A549 (cell line): ENCODE measurements at regions of chr7 and their contacts with region 1.

Region 1: DNA sequence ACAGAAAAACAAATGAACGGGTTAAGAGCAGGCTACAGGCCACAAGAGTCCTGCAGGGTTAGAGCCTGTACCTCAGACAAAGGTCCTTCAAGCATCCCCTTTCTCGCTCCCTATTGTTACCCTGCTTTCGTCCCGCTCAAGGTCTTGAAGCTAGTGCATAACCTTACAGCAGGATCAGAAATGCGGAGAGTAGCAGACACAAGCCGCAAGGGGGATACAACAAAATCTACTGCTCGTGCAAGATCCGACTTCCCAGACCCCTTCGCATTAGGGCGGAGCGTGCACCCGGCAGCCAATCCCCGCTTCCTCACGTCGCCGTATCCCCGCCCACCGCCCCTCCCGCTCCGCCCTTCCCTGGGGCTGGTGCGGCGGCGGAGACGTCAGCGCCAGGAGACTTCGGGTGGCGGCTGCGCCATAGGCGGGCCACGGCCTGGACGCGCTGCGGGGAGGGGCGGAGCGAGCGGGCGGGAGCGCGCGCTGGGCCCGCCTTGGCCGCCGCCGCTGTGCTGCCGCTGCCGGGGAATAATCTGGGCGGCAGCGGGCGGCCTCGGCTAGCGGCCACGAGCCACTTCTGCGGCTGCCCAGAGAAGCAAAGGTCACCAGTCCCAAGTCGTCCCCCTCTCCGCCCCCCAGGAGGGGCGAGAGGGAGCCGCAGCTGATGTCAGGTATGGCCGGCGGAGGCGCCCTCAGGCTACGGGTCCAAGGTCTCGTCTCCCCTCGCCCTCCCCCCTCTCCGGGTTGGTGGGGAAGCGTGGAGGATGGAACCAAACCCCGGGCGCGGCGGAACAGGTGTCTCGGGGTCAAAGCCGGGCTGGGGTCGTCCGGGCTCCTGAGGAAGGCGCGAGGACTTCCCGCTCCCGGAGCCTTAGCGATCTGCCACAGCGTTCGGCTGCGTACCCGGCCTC is at the start of gene C1GALT1:
- DNase-seq: peak; percentile 81 to 98
- ATAC-seq: peak; percentile 88 to 92
- H3K4me3 ChIP-seq: peak within 1 kb of the TSS; percentile 72
- H3K27ac ChIP-seq: peak within 1 kb of the TSS; percentile 86 to 92
- H3K4me1 ChIP-seq: peaks cover 37% of the 10 kb centered on the region
- CTCF ChIP-seq: no peak; the same call in 1 of the 3 replicates
- EP300 ChIP-seq: no peak
- POLR2A ChIP-seq: peak; percentile 77
- RAD21 ChIP-seq: peak in 1 of 2 experiments; percentile 43; a peak in 2 of 5 replicates
- polyA plus RNA-seq, gene C1GALT1: 37.7 and 50.1 TPM in 2 replicates

Region 2: GRCh38 chr7:7114706-7115295 is 67.6 kb before region 1 on chr7:
- CTCF ChIA-PET with region 1: interaction called, 11 read pairs
- POLR2A ChIA-PET with region 1: interaction called, 4 read pairs
- DNase-seq: peak in 1 of 2 experiments; percentile 24
- ATAC-seq: peak in 1 of 2 experiments; percentile 83; a peak in 3 of 6 replicates
- H3K4me3 ChIP-seq: no peak overlapping the region
- H3K27ac ChIP-seq: no peak overlapping the region
- H3K4me1 ChIP-seq: peaks cover 11% of the 10 kb centered on the region; the same call in 2 of the 3 replicates
- CTCF ChIP-seq: no peak
- EP300 ChIP-seq: no peak
- POLR2A ChIP-seq: no peak
- RAD21 ChIP-seq: no peak